ENCODE measurements at regions of chr4 and their contacts with region 1.

Region 1: DNA sequence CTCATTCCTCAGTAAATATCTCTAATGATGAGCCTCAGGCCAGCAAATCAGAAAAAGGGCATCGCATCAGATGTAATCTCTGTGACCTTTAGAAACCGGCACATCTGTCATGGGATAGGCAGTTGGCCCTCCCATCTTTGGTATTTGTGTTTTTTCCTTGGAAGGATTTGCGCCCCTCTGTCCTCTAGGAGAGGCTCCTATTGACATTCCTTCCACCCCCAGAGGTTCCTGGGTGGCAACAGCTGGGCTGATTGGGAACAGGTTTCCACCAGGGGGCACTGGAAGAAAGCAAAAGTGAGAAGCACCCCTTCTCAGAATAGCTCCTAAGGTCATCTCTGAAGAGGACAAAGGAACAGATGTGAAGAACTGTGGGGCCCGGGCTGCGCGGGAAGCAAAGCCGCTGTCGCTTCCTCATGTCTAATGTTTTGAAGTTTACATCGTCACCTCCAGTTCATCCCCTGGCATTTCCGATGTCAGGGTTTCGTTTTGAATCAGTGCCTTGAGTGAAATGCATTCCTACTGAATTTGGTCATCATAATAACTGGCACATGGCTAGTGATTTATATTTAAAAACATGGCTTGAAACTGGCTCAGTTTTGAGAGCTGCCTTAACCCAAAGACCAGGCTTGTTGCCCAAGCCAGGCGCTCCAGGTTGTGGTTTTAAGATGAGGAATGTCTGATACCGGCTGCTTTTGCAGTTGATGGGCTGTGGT is 6.2 kb downstream of the TXK start:
- DNase-seq: peak; percentile 95
- H3K4me3 Mint-ChIP-seq: peak overlapping the region; percentile 51
- H3K27ac Mint-ChIP-seq: peak overlapping the region; percentile 99
- H3K4me1 Mint-ChIP-seq: peaks cover 80% of the 10 kb centered on the region
- H3K27me3 Mint-ChIP-seq: no peaks in the 10 kb centered on the region

Region 2: GRCh38 chr4:47485047-47485692 is 642.7 kb before region 1 on chr4 and contains the start of gene ATP10D:
- CTCF ChIA-PET with region 1: no interaction called
- intact Hi-C with region 1: loop called (anchors 10 kb)
- DNase-seq: peak; percentile 82
- H3K4me3 Mint-ChIP-seq: peak within 1 kb of the TSS; percentile 93
- H3K27ac Mint-ChIP-seq: peak within 1 kb of the TSS; percentile 65
- H3K4me1 Mint-ChIP-seq: peaks cover 16% of the 10 kb centered on the region
- H3K27me3 Mint-ChIP-seq: no peaks in the 10 kb centered on the region
- total RNA-seq, gene ATP10D: 2.7 to 3.1 TPM

Region 3: DNA sequence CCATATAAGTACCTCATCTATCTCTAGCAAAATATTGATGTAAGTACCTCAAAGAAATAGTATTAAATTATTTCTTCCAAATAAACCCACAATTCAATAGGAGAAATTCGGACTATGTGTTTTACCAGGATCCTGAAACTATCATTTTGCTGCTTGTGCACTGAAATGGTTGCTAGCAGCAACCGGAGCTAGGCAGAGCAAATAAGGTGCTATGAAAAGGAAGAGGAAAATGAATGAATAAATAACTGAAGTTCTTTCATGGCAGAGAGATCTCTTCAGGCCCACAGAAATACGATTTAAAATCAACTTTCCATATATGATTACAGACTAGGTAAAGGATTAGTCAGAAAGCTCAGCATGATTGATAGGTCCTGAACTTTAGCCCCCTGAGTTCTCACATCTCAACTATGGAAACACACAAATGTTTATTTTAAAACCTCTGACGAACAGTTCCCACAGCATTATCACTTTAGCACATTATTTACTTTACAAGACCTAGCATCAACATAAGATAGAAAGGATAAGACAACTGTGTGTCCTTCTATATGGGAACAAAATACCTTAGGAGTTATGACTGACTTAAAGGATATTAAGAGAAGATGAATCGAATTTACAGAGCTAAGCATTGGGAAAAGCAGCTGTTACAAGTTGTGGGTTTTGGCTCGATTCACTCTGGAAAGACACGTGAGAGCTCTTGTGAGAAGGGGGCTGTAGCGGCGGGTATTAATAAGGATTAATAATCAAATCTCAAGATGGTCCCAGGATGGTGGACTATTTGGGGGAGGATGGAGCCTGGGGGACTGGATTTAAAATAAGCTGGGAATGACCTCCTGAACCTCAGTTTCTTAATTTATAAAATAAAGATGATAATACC is 394.3 kb before region 1 on chr4:
- CTCF ChIA-PET with region 1: no interaction called
- intact Hi-C with region 1: no loop called
- DNase-seq: no peak
- H3K4me3 Mint-ChIP-seq: no peak overlapping the region
- H3K27ac Mint-ChIP-seq: no peak overlapping the region
- H3K4me1 Mint-ChIP-seq: no peaks in the 10 kb centered on the region
- H3K27me3 Mint-ChIP-seq: peaks cover 17% of the 10 kb centered on the region

Region 4: DNA sequence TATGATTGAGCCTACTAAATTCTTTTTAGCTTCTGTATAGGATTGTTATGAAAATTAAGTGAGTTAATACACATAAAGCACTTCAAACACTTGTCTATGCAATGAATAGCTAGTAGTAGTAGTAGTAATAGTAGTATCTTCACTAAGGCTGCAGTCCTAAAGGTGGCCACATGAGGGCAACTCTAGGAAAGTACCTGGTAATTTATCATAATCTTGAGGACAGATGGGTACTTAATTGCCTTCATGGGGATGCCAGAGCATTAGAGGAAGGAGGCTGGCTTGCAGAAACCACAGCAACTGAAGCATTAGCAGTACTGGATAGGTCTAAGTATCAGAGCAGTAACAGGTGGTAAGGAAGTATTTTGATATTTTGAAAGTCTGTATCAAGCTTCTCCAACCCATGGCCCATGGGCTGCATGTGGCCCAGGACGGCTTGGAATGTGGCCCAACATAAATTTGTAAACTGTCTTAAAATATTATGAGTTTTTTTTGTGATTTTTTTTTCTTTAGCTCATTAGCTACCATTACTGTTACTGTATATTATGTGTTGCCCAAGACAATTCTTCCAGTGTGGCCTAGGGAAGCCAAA is 93.9 kb before region 1 on chr4:
- CTCF ChIA-PET with region 1: interaction called, 8 read pairs
- intact Hi-C with region 1: loop called (anchors 1 kb)
- DNase-seq: peak; percentile 87
- H3K4me3 Mint-ChIP-seq: no peak overlapping the region
- H3K27ac Mint-ChIP-seq: no peak overlapping the region
- H3K4me1 Mint-ChIP-seq: peaks cover 56% of the 10 kb centered on the region
- H3K27me3 Mint-ChIP-seq: no peaks in the 10 kb centered on the region

Region 5: GRCh38 chr4:48103483-48104139 is 24.2 kb before region 1 on chr4:
- CTCF ChIA-PET with region 1: interaction called, 45 read pairs
- intact Hi-C with region 1: loop called (anchors 1 kb)
- DNase-seq: peak; percentile 64
- H3K4me3 Mint-ChIP-seq: no peak overlapping the region
- H3K27ac Mint-ChIP-seq: peak overlapping the region; percentile 93
- H3K4me1 Mint-ChIP-seq: peaks cover 46% of the 10 kb centered on the region
- H3K27me3 Mint-ChIP-seq: no peaks in the 10 kb centered on the region

Region 6: GRCh38 chr4:48269861-48270522 is 142.2 kb after region 1 on chr4:
- CTCF ChIA-PET with region 1: interaction called, 12 read pairs
- intact Hi-C with region 1: loop called (anchors 1 kb)
- DNase-seq: peak; percentile 93
- H3K4me3 Mint-ChIP-seq: peak overlapping the region; percentile 93
- H3K27ac Mint-ChIP-seq: peak overlapping the region; percentile 83
- H3K4me1 Mint-ChIP-seq: peaks cover 9% of the 10 kb centered on the region
- H3K27me3 Mint-ChIP-seq: no peaks in the 10 kb centered on the region

Region 7: DNA sequence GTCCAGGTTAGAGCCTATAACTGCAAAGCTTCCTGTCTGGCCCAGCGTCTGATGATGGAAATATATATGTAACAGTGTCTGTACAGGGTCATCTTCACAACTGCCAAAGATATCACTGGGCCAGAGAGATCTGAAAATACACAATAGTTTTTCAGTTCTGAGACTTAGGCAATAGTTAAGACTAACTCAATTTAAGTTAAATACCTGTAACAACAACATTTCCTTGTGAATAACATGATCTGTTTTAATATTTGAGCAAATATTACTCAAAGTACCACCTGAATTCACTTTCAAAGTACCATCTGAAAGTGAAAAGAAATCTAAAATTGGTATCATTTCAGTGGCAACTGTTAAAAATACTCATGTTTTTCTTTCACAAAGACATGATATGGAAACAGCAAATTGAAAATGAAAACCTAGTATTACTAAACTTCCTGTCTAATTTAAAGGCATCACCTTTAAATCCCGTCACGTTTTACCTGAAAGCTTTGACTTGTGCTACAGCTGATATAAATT is 371.8 kb after region 1 on chr4:
- CTCF ChIA-PET with region 1: no interaction called
- intact Hi-C with region 1: loop called (anchors 2 kb)
- DNase-seq: no peak
- H3K4me3 Mint-ChIP-seq: no peak overlapping the region
- H3K27ac Mint-ChIP-seq: no peak overlapping the region
- H3K4me1 Mint-ChIP-seq: peaks cover 16% of the 10 kb centered on the region
- H3K27me3 Mint-ChIP-seq: no peaks in the 10 kb centered on the region

Region 8: DNA sequence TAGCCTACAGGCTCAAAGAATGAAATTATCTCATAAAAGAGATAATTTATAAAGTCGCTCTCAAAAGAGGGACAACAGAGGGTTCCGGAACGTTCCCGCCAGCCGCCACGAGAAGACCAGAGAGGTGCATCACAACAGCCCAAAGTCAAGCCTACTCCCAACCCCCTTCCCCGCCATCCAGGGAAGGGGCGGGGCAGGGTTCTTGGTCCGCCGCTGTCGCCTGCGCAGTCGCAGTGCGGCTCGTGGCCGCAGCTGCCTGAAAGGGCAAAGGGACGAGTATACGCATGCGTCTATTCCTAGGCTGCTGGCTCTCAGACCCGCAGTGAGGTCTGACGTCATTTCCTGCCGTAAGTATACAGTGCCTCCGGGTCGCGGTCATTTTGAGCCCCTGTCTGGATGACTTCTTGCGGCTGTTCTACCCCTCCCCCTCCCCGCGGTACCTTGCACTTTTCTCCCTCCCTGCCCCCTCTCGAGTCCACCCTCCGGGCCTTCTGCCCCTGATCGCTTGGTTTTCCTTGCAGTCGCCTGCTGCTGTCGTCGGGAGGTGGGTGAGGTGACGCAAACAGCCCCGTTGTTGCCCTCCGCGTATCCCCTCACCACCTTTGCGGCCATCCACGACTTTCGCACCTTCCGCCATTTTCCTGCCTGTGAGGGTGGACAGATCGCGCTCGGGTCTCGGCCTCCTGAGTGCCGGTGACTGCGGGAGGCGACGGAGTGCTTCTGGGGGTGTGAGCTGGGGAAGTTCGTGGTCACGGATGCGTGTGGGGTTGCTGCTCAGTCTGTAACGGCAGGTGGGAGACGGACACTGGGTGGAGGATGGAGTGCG is 703.1 kb after region 1 on chr4 and contains the start of gene OCIAD1:
- CTCF ChIA-PET with region 1: no interaction called
- intact Hi-C with region 1: loop called (anchors 1 kb)
- DNase-seq: peak; percentile 96
- H3K4me3 Mint-ChIP-seq: peak within 1 kb of the TSS; percentile 100
- H3K27ac Mint-ChIP-seq: peak within 1 kb of the TSS; percentile 100
- H3K4me1 Mint-ChIP-seq: peaks cover 23% of the 10 kb centered on the region
- H3K27me3 Mint-ChIP-seq: peaks cover 6% of the 10 kb centered on the region
- total RNA-seq, gene OCIAD1: 91.9 to 99.0 TPM

Measured in activated naive CD4-positive, alpha-beta T cell treated with anti-CD3 and anti-CD28 coated beads for 36 hours (primary cell).